ENCODE measurements at regions of chr17 and their contacts with region 1.

Region 1: DNA sequence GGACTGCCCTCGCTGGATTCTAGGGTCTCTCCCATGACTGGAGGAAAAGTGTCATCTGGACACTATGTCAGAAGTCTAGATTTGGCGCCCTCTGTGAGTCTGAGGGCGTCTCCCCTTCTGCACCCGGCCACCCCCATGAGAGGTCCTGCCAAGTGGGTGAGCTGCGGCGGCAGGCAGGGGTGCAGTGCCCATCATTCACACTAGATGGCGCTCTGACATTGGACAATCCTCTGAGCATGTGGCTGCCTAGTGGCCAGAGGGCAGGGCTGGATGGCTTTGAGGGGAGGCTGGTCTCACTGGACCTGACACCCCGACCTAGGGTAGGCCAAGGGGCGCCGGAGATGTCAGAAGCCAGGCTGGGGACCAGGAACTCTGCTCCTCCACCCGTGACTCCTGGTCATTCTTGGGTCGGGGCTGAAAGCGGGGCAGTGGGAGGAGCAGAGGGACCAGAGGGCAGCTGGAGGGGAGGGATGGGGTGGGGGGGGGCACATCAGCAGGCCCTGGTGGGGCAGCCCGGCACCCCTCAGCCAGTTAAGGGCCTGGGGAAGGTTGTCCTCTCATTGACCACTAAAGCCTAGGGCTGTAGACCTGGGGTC is 28.0 kb downstream of the MRM1 start:
- DNase-seq: peak; percentile 73
- H3K4me3 ChIP-seq: no peak overlapping the region
- H3K27ac ChIP-seq: no peak overlapping the region
- H3K4me1 ChIP-seq: no peaks in the 10 kb centered on the region
- CTCF ChIP-seq: peak; percentile 96

Region 2: GRCh38 chr17:36705874-36706731 is 76.8 kb after region 1 on chr17:
- CTCF ChIA-PET with region 1: no interaction called
- POLR2A ChIA-PET with region 1: no interaction called
- intact Hi-C with region 1: loop called (anchors 5 kb)
- DNase-seq: peak; percentile 40
- H3K4me3 ChIP-seq: no peak overlapping the region
- H3K27ac ChIP-seq: no peak overlapping the region
- H3K4me1 ChIP-seq: no peaks in the 10 kb centered on the region
- CTCF ChIP-seq: peak; percentile 86

Region 3: GRCh38 chr17:36755586-36755985 is 126.2 kb after region 1 on chr17:
- CTCF ChIA-PET with region 1: no interaction called
- POLR2A ChIA-PET with region 1: no interaction called
- intact Hi-C with region 1: loop called (anchors 5 kb)
- DNase-seq: peak; percentile 13
- H3K4me3 ChIP-seq: no peak overlapping the region
- H3K27ac ChIP-seq: no peak overlapping the region
- H3K4me1 ChIP-seq: no peaks in the 10 kb centered on the region
- CTCF ChIP-seq: peak; percentile 65

Region 4: GRCh38 chr17:37047631-37048104 is 418.3 kb after region 1 on chr17:
- CTCF ChIA-PET with region 1: no interaction called
- POLR2A ChIA-PET with region 1: no interaction called
- intact Hi-C with region 1: loop called (anchors 1 kb)
- DNase-seq: peak; percentile 79
- H3K4me3 ChIP-seq: no peak overlapping the region
- H3K27ac ChIP-seq: no peak overlapping the region
- H3K4me1 ChIP-seq: peaks cover 10% of the 10 kb centered on the region
- CTCF ChIP-seq: peak; percentile 97

Region 5: DNA sequence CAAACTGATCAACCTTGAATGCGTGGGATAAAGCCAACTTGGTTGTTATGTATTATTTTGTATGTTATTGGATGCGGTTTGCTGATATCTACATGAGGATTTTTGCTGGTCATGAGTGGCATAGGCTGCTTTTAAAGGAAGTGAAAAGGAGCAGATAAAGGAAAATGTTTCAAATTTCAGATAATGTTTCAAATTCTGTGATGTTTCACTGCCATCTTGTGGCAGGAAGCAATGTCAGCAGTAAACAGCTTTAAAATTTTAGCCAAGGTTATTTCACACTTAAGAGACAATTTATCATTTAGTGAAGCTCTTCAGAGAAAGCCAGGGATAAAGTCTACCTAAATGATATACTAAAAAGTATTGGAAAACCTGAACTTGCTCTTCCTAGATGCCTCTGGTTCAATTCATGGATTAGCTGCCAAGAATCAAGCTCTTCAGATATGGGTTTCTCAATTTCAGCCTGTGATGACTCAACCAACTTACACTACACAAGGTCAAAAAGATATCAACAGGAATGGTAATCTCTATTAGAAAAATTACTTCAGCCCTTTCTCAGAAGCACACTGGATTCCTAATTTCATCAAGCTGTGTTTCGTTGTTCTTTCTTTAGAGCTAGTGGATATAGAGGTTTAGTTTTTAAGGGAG is 610.5 kb after region 1 on chr17:
- CTCF ChIA-PET with region 1: no interaction called
- POLR2A ChIA-PET with region 1: no interaction called
- intact Hi-C with region 1: loop called (anchors 2 kb)
- DNase-seq: peak; percentile 39
- H3K4me3 ChIP-seq: no peak overlapping the region
- H3K27ac ChIP-seq: no peak overlapping the region
- H3K4me1 ChIP-seq: no peaks in the 10 kb centered on the region
- CTCF ChIP-seq: peak; percentile 90